Transverse colon (tissue), 4 donors: ENCODE measurements at regions of chr4 and their contacts with region 1.

Region 1: GRCh38 chr4:176680668-176681180 is 112.0 kb downstream of the VEGFC start:
- DNase-seq: no peak
- H3K4me3 ChIP-seq: no peak overlapping the region
- H3K27ac ChIP-seq: no peak overlapping the region
- H3K4me1 ChIP-seq: peaks cover 0 to 5% (median 0%) of the 10 kb centered on the region in 4 donors
- H3K27me3 ChIP-seq: no peaks in the 10 kb centered on the region
- CTCF ChIP-seq: no peak
- EP300 ChIP-seq: no peak
- POLR2A ChIP-seq: no peak

Region 2: GRCh38 chr4:176981551-176981950 is 300.8 kb after region 1 on chr4:
- in situ Hi-C with region 1: no loop called
- intact Hi-C with region 1: loop called (anchors 5 kb)
- DNase-seq: no peak
- H3K4me3 ChIP-seq: no peak overlapping the region
- H3K27ac ChIP-seq: no peak overlapping the region
- H3K4me1 ChIP-seq: no peaks in the 10 kb centered on the region
- H3K27me3 ChIP-seq: no peaks in the 10 kb centered on the region
- CTCF ChIP-seq: no peak
- EP300 ChIP-seq: no peak
- POLR2A ChIP-seq: no peak